CD4-positive, alpha-beta memory T cell (primary cell): ENCODE measurements at regions of chr6 and their contacts with region 1.

Region 1: GRCh38 chr6:63598049-63599036 is 26.1 kb downstream of the LOC128125822 start:
- DNase-seq: peak; percentile 75 to 79 (median 77)
- H3K4me3 ChIP-seq: peak overlapping the region; percentile 67 to 73
- H3K4me3 Mint-ChIP-seq: peak overlapping the region; percentile 68 to 93 (median 86)
- H3K27ac ChIP-seq: no peak overlapping the region
- H3K27ac Mint-ChIP-seq: peak overlapping the region in 4 of 7 donors; percentile 36 to 68 (median 65)
- H3K4me1 ChIP-seq: peaks cover 14% of the 10 kb centered on the region
- H3K4me1 Mint-ChIP-seq: peaks cover 9 to 19% (median 13%) of the 10 kb centered on the region in 4 donors
- H3K27me3 ChIP-seq: no peaks in the 10 kb centered on the region
- H3K27me3 Mint-ChIP-seq: peaks cover 2 to 8% of the 10 kb centered on the region in 2 donors

Region 2: DNA sequence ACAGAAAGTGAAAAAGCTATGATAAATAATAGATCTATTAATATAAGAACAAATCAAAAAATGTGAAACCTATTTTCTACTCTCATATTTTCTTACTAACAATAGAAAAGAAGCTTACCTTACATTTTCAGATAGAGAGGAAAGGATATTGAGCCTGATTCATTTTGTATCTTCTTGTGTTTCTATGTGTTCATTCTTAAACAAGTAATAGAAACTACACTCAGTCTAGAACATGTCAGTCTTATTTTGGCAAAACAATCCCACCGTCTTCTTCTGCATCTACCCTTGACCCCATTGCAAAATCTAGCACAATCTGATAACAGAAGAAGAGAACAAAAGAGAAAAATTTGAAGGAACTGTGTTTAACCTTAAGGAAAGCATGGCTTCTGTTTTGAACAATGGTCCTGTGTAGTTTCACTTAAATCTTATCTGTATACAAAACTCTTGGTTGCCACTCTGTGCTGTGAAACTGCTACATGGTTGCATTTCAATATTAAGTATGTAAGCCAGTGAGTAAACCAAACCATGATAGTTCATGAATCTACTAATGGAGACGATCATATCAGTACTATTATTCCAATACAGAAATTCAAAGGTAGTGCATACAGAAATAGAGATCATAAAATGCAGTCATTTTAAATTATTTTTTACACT is 209.0 kb before region 1 on chr6:
- CTCF ChIA-PET with region 1: no interaction called
- POLR2A ChIA-PET with region 1: no interaction called
- intact Hi-C with region 1: no loop called
- DNase-seq: no peak
- H3K4me3 ChIP-seq: no peak overlapping the region
- H3K4me3 Mint-ChIP-seq: no peak overlapping the region
- H3K27ac ChIP-seq: no peak overlapping the region
- H3K27ac Mint-ChIP-seq: no peak overlapping the region
- H3K4me1 ChIP-seq: no peaks in the 10 kb centered on the region
- H3K4me1 Mint-ChIP-seq: no peaks in the 10 kb centered on the region
- H3K27me3 ChIP-seq: no peaks in the 10 kb centered on the region
- H3K27me3 Mint-ChIP-seq: peaks cover 0 to 2% of the 10 kb centered on the region in 2 donors

Region 3: DNA sequence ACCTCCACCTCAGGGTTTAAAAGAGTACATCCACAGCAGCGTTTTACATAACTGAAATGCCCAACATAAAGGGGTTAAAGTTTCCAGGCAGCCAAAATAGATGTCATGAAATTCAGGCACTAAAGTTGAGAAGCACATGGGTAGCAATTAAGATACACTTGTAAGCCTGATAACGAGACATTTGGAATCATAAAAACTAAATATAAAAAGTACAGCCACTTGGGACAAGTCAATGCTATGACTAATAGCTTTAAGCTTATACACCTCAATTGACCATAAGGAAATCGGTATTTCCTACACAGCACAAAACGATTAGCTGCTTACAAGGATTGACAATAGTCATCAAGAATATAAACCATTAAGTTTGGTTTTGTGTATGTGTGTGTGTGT is 14.2 kb before region 1 on chr6:
- CTCF ChIA-PET with region 1: interaction called, 12 read pairs
- POLR2A ChIA-PET with region 1: no interaction called
- intact Hi-C with region 1: no loop called
- DNase-seq: no peak
- H3K4me3 ChIP-seq: no peak overlapping the region
- H3K4me3 Mint-ChIP-seq: no peak overlapping the region
- H3K27ac ChIP-seq: no peak overlapping the region
- H3K27ac Mint-ChIP-seq: no peak overlapping the region
- H3K4me1 ChIP-seq: no peaks in the 10 kb centered on the region
- H3K4me1 Mint-ChIP-seq: no peaks in the 10 kb centered on the region
- H3K27me3 ChIP-seq: no peaks in the 10 kb centered on the region
- H3K27me3 Mint-ChIP-seq: no peaks in the 10 kb centered on the region

Region 4: GRCh38 chr6:63635588-63636517 is 37.5 kb after region 1 on chr6 and contains the start of gene PHF3:
- CTCF ChIA-PET with region 1: interaction called, 28 read pairs
- POLR2A ChIA-PET with region 1: interaction called, 21 read pairs
- intact Hi-C with region 1: loop called (anchors 1 kb)
- DNase-seq: peak; percentile 90 to 94 (median 93)
- H3K4me3 ChIP-seq: peak within 1 kb of the TSS; percentile 71 to 86
- H3K4me3 Mint-ChIP-seq: peak within 1 kb of the TSS; percentile 95 to 100 (median 100)
- H3K27ac ChIP-seq: peak within 1 kb of the TSS; percentile 94
- H3K27ac Mint-ChIP-seq: peak within 1 kb of the TSS; percentile 94 to 99 (median 99)
- H3K4me1 ChIP-seq: peaks cover 49% of the 10 kb centered on the region
- H3K4me1 Mint-ChIP-seq: peaks cover 35 to 54% (median 44%) of the 10 kb centered on the region in 4 donors
- H3K27me3 ChIP-seq: no peaks in the 10 kb centered on the region
- H3K27me3 Mint-ChIP-seq: no peaks in the 10 kb centered on the region
- total RNA-seq, gene PHF3: 115 to 119 TPM

Region 5: GRCh38 chr6:63714091-63714490 is 115.7 kb after region 1 on chr6:
- CTCF ChIA-PET with region 1: interaction called, 5 read pairs
- POLR2A ChIA-PET with region 1: no interaction called
- intact Hi-C with region 1: loop called (anchors 5 kb)
- DNase-seq: no peak
- H3K4me3 ChIP-seq: no peak overlapping the region
- H3K4me3 Mint-ChIP-seq: no peak overlapping the region
- H3K27ac ChIP-seq: no peak overlapping the region
- H3K27ac Mint-ChIP-seq: no peak overlapping the region
- H3K4me1 ChIP-seq: no peaks in the 10 kb centered on the region
- H3K4me1 Mint-ChIP-seq: peaks cover 0 to 3% (median 2%) of the 10 kb centered on the region in 4 donors
- H3K27me3 ChIP-seq: no peaks in the 10 kb centered on the region
- H3K27me3 Mint-ChIP-seq: no peaks in the 10 kb centered on the region

Region 6: GRCh38 chr6:63764318-63764916 is 166.1 kb after region 1 on chr6:
- CTCF ChIA-PET with region 1: interaction called, 225 read pairs
- POLR2A ChIA-PET with region 1: interaction called, 5 read pairs
- intact Hi-C with region 1: loop called (anchors 1 kb)
- DNase-seq: peak in 4 of 5 donors; percentile 36 to 53 (median 44)
- H3K4me3 ChIP-seq: no peak overlapping the region
- H3K4me3 Mint-ChIP-seq: no peak overlapping the region
- H3K27ac ChIP-seq: no peak overlapping the region
- H3K27ac Mint-ChIP-seq: no peak overlapping the region
- H3K4me1 ChIP-seq: no peaks in the 10 kb centered on the region
- H3K4me1 Mint-ChIP-seq: no peaks in the 10 kb centered on the region
- H3K27me3 ChIP-seq: no peaks in the 10 kb centered on the region
- H3K27me3 Mint-ChIP-seq: peaks cover 6 to 14% of the 10 kb centered on the region in 2 donors

Region 7: GRCh38 chr6:63802606-63803206 is 204.4 kb after region 1 on chr6:
- CTCF ChIA-PET with region 1: interaction called, 11 read pairs
- POLR2A ChIA-PET with region 1: no interaction called
- intact Hi-C with region 1: no loop called
- DNase-seq: no peak
- H3K4me3 ChIP-seq: no peak overlapping the region
- H3K4me3 Mint-ChIP-seq: no peak overlapping the region
- H3K27ac ChIP-seq: no peak overlapping the region
- H3K27ac Mint-ChIP-seq: no peak overlapping the region
- H3K4me1 ChIP-seq: no peaks in the 10 kb centered on the region
- H3K4me1 Mint-ChIP-seq: no peaks in the 10 kb centered on the region
- H3K27me3 ChIP-seq: no peaks in the 10 kb centered on the region
- H3K27me3 Mint-ChIP-seq: peaks cover 1 to 5% of the 10 kb centered on the region in 2 donors

Region 8: DNA sequence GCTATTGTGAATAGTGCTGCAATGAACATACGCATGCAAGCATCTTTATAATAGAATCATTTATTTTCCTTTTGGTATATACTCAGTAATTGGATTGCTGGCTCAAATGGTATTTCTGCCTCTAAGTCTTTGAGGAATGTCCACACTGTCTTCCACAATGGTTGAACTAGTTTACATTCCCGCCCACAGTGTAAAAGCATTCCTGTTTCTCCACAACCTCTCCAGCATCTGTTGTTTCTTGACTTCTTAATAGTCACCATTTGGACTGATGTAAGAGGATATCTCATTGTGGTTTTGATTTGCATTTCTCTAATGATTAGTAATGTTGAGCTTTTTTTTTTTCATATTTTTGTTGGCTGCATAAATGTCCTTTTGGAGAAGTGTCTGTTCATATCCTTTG is 245.9 kb after region 1 on chr6:
- CTCF ChIA-PET with region 1: no interaction called
- POLR2A ChIA-PET with region 1: no interaction called
- intact Hi-C with region 1: no loop called
- DNase-seq: no peak
- H3K4me3 ChIP-seq: no peak overlapping the region
- H3K4me3 Mint-ChIP-seq: no peak overlapping the region
- H3K27ac ChIP-seq: no peak overlapping the region
- H3K27ac Mint-ChIP-seq: peak overlapping the region in 1 of 7 donors; percentile 25
- H3K4me1 ChIP-seq: no peaks in the 10 kb centered on the region
- H3K4me1 Mint-ChIP-seq: no peaks in the 10 kb centered on the region
- H3K27me3 ChIP-seq: no peaks in the 10 kb centered on the region
- H3K27me3 Mint-ChIP-seq: peaks cover 1 to 2% of the 10 kb centered on the region in 2 donors